Mammary epithelial cell (primary cell): ENCODE measurements at regions of chr6 and their contacts with region 1.

Region 1: GRCh38 chr6:32153564-32154513 is at the start of gene PPT2:
- DNase-seq: peak; percentile 72
- H3K4me3 ChIP-seq: peak within 1 kb of the TSS; percentile 67 to 78 (median 70)
- H3K27ac ChIP-seq: peak within 1 kb of the TSS; percentile 54
- H3K4me1 ChIP-seq: peaks cover 21% of the 10 kb centered on the region
- H3K27me3 ChIP-seq: no peaks in the 10 kb centered on the region
- CTCF ChIP-seq: peak in 1 of 2 donors; percentile 38
- total RNA-seq, gene PPT2: 10.0 to 15.6 TPM

Region 2: DNA sequence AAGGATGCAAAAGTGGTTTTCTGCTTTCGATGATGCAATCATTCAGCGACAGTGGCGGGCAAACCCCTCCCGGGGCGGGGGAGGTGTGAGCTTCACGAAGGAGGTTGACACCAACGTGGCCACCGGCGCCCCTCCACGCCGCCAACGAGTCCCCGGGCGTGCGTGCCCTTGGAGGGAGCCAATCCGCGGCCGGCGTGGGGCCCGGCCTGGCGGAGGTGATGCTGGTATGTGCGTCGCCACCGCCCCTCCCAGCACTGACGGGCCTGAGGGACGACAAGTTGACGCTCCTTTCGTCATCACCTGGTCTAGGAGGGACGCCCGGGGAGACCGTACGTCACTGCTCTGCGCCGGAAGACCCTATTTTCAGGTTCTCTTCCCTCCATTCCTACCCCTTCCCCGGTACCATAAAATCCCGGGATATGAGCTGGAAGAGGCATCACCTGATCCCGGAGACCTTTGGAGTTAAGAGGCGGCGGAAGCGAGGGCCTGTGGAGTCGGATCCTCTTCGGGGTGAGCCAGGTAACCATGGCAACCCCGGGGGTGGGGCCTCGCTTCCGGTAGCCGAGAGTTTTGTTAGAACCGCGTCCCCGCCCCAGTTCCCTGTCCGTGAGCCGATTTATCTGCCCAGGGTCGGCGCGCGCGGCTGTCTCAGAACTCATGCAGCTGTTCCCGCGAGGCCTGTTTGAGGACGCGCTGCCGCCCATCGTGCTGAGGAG is 181.7 kb before region 1 on chr6 and contains the start of gene DXO:
- CTCF ChIA-PET with region 1: no interaction called
- dilution Hi-C with region 1: no loop called
- in situ Hi-C with region 1: no loop called
- intact Hi-C with region 1: loop called (anchors 10 kb)
- DNase-seq: peak; percentile 99
- H3K4me3 ChIP-seq: peak within 1 kb of the TSS; percentile 61 to 80 (median 77)
- H3K27ac ChIP-seq: peak within 1 kb of the TSS; percentile 97
- H3K4me1 ChIP-seq: peaks cover 21% of the 10 kb centered on the region
- H3K27me3 ChIP-seq: no peaks in the 10 kb centered on the region
- CTCF ChIP-seq: no peak
- total RNA-seq, gene DXO: 15.7 to 24.1 TPM

Region 3: GRCh38 chr6:32047850-32048766 is 105.7 kb before region 1 on chr6:
- CTCF ChIA-PET with region 1: no interaction called
- dilution Hi-C with region 1: no loop called
- in situ Hi-C with region 1: no loop called
- intact Hi-C with region 1: loop called (anchors 10 kb)
- DNase-seq: peak; percentile 28
- H3K4me3 ChIP-seq: no peak overlapping the region
- H3K27ac ChIP-seq: no peak overlapping the region
- H3K4me1 ChIP-seq: no peaks in the 10 kb centered on the region
- H3K27me3 ChIP-seq: no peaks in the 10 kb centered on the region
- CTCF ChIP-seq: peak; percentile 80 to 85

Region 4: GRCh38 chr6:32087574-32088486 is 66.0 kb before region 1 on chr6:
- CTCF ChIA-PET with region 1: no interaction called
- dilution Hi-C with region 1: no loop called
- in situ Hi-C with region 1: no loop called
- intact Hi-C with region 1: loop called (anchors 1 kb)
- DNase-seq: peak; percentile 34
- H3K4me3 ChIP-seq: no peak overlapping the region
- H3K27ac ChIP-seq: no peak overlapping the region
- H3K4me1 ChIP-seq: peaks cover 13% of the 10 kb centered on the region
- H3K27me3 ChIP-seq: peaks cover 14% of the 10 kb centered on the region
- CTCF ChIP-seq: peak; percentile 21 to 61

Region 5: GRCh38 chr6:32118782-32119628 is 34.8 kb before region 1 on chr6:
- CTCF ChIA-PET with region 1: no interaction called
- dilution Hi-C with region 1: no loop called
- in situ Hi-C with region 1: no loop called
- intact Hi-C with region 1: loop called (anchors 1 kb)
- DNase-seq: peak; percentile 65
- H3K4me3 ChIP-seq: no peak overlapping the region
- H3K27ac ChIP-seq: no peak overlapping the region
- H3K4me1 ChIP-seq: peaks cover 5% of the 10 kb centered on the region
- H3K27me3 ChIP-seq: no peaks in the 10 kb centered on the region
- CTCF ChIP-seq: peak; percentile 88 to 90

Region 6: DNA sequence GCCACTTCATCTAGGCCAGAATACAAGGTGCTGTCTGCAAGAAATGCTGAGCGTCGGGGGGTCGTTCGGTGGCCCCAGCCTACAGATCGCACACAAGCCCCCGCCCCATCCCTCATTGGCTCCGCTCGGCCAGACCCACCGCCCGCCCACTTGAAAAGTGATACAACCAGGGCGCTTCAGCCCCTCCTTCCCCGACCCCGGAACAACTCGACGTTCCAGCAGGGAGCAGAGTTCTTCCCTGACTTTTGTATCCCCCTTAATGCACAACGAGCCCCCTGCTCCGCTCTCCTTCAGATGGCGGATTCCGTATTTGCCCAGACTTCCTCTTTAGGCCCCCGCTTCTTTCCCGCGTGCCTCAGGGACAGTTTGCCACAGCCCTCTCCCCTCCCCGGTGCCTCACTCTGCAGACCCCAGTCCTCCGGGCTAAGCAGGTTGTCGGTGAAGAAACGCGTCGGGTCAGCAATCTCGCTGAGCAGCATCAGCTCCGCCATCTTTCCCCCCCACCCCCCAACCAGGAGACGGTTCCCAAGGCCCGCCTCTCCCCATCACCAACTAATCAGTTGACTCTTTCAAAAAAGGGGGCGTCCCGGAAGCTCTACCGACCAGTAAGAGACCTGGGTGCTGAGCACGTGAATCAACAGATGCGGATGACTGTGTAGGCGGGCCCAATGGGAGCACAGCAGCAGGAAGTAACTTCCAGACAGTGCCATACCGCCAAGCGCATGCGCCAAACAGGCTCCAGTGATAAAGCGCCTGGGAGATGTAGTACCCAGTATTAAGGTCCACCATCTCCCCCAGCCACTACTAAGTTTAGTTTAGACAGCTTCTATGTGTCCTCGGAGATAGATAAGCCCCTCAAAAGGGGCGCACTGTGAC is 25.9 kb before region 1 on chr6 and contains the start of gene ATF6B:
- CTCF ChIA-PET with region 1: no interaction called
- dilution Hi-C with region 1: no loop called
- in situ Hi-C with region 1: no loop called
- intact Hi-C with region 1: loop called (anchors 1 kb)
- DNase-seq: peak; percentile 99
- H3K4me3 ChIP-seq: peak within 1 kb of the TSS; percentile 80 to 99 (median 82)
- H3K27ac ChIP-seq: peak within 1 kb of the TSS; percentile 70
- H3K4me1 ChIP-seq: peaks cover 18% of the 10 kb centered on the region
- H3K27me3 ChIP-seq: no peaks in the 10 kb centered on the region
- CTCF ChIP-seq: no peak
- total RNA-seq, gene ATF6B: 20.3 to 69.0 TPM

Region 7: GRCh38 chr6:32177788-32178546 is 24.1 kb after region 1 on chr6 and contains the start of gene RNF5:
- CTCF ChIA-PET with region 1: no interaction called
- dilution Hi-C with region 1: no loop called
- in situ Hi-C with region 1: no loop called
- intact Hi-C with region 1: loop called (anchors 1 kb)
- DNase-seq: peak; percentile 100
- H3K4me3 ChIP-seq: peak within 1 kb of the TSS; percentile 52 to 94 (median 69)
- H3K27ac ChIP-seq: peak within 1 kb of the TSS; percentile 94
- H3K4me1 ChIP-seq: peaks cover 36% of the 10 kb centered on the region
- H3K27me3 ChIP-seq: no peaks in the 10 kb centered on the region
- CTCF ChIP-seq: no peak
- total RNA-seq, gene RNF5: 28.4 to 28.7 TPM

Region 8: GRCh38 chr6:32244946-32245398 is 91.1 kb after region 1 on chr6:
- CTCF ChIA-PET with region 1: no interaction called
- dilution Hi-C with region 1: no loop called
- in situ Hi-C with region 1: no loop called
- intact Hi-C with region 1: no loop called
- DNase-seq: peak; percentile 33
- H3K4me3 ChIP-seq: no peak overlapping the region
- H3K27ac ChIP-seq: no peak overlapping the region
- H3K4me1 ChIP-seq: no peaks in the 10 kb centered on the region
- H3K27me3 ChIP-seq: no peaks in the 10 kb centered on the region
- CTCF ChIP-seq: peak; percentile 77 to 88